ENCODE measurements at regions of chr1 and their contacts with region 1.

Region 1: DNA sequence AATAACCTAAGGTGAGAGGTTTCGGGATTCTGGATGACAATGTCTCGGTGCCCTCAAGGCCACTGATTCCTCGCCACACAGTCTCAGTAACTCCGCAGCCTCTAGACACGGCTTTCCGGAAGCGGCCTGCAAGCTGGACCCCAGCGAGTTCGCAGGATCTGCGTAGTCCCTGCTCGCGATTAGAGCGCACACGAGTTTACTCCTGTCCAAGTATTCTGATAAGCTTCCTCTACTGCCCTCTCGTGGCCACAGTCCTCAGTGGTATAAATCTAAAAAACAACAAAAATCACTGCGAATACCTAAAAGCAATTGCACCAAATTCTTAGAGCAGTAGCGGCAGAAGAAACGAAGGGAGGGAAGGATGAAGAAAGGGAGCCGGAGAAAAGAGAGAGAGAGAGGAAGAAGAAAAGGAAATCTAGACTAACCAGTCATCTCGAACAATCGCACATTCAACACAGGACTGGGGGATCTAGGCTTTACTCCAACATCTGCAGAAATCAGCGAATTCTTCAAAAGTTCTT is 1.1 kb upstream of the PLXNA2 start:
- DNase-seq: peak; percentile 88
- ATAC-seq: peak; percentile 73
- H3K4me3 Mint-ChIP-seq: peak overlapping the region; percentile 39
- H3K27ac Mint-ChIP-seq: no peak overlapping the region
- H3K4me1 Mint-ChIP-seq: peaks cover 12% of the 10 kb centered on the region
- H3K27me3 Mint-ChIP-seq: peaks cover 58% of the 10 kb centered on the region

Region 2: GRCh38 chr1:208093754-208094719 is 151.2 kb before region 1 on chr1:
- CTCF ChIA-PET with region 1: interaction called, 12 read pairs
- DNase-seq: peak; percentile 70
- ATAC-seq: peak; percentile 70
- H3K4me3 Mint-ChIP-seq: no peak overlapping the region
- H3K27ac Mint-ChIP-seq: no peak overlapping the region
- H3K4me1 Mint-ChIP-seq: no peaks in the 10 kb centered on the region
- H3K27me3 Mint-ChIP-seq: no peaks in the 10 kb centered on the region

Region 3: GRCh38 chr1:208132287-208132883 is 112.9 kb before region 1 on chr1:
- CTCF ChIA-PET with region 1: interaction called, 32 read pairs
- DNase-seq: peak; percentile 70
- ATAC-seq: peak; percentile 83
- H3K4me3 Mint-ChIP-seq: no peak overlapping the region
- H3K27ac Mint-ChIP-seq: no peak overlapping the region
- H3K4me1 Mint-ChIP-seq: no peaks in the 10 kb centered on the region
- H3K27me3 Mint-ChIP-seq: peaks cover 9% of the 10 kb centered on the region